Caco-2 (cell line): ENCODE measurements at regions of chr11 and their contacts with region 1.

Region 1: DNA sequence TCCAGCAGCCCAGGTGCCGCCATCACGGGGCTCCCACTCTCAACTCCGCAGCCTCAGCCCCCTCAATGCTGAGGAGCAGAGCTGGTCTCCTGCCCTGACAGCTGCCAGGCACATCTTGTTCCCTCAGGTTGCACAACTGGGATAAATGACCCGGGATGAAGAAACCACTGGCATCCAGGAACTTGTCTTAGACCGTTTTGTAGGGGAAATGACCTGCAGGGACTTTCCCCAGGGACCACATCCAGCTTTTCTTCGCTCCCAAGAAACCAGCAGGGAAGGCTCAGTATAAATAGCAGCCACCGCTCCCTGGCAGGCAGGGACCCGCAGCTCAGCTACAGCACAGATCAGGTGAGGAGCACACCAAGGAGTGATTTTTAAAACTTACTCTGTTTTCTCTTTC is at the start of gene SAA1:
- DNase-seq: no peak
- H3K4me3 ChIP-seq: no peak within 1 kb of the TSS
- H3K4me3 Mint-ChIP-seq: no peak within 1 kb of the TSS
- H3K27ac Mint-ChIP-seq: no peak within 1 kb of the TSS
- H3K4me1 ChIP-seq: peaks cover 15% of the 10 kb centered on the region
- H3K4me1 Mint-ChIP-seq: peaks cover 7% of the 10 kb centered on the region
- H3K27me3 ChIP-seq: no peaks in the 10 kb centered on the region
- H3K27me3 Mint-ChIP-seq: no peaks in the 10 kb centered on the region
- CTCF ChIP-seq: no peak
- total RNA-seq, gene SAA1: not detected in 2 replicates

Region 2: GRCh38 chr11:18243783-18244362 is 22.1 kb before region 1 on chr11:
- CTCF ChIA-PET with region 1: interaction called, 11 read pairs
- POLR2A ChIA-PET with region 1: no interaction called
- intact Hi-C with region 1: no loop called
- DNase-seq: peak; percentile 67 to 81
- H3K4me3 ChIP-seq: no peak overlapping the region
- H3K4me3 Mint-ChIP-seq: no peak overlapping the region
- H3K27ac Mint-ChIP-seq: no peak overlapping the region
- H3K4me1 ChIP-seq: no peaks in the 10 kb centered on the region
- H3K4me1 Mint-ChIP-seq: no peaks in the 10 kb centered on the region
- H3K27me3 ChIP-seq: no peaks in the 10 kb centered on the region
- H3K27me3 Mint-ChIP-seq: peaks cover 9% of the 10 kb centered on the region
- CTCF ChIP-seq: peak; percentile 85 to 89

Region 3: DNA sequence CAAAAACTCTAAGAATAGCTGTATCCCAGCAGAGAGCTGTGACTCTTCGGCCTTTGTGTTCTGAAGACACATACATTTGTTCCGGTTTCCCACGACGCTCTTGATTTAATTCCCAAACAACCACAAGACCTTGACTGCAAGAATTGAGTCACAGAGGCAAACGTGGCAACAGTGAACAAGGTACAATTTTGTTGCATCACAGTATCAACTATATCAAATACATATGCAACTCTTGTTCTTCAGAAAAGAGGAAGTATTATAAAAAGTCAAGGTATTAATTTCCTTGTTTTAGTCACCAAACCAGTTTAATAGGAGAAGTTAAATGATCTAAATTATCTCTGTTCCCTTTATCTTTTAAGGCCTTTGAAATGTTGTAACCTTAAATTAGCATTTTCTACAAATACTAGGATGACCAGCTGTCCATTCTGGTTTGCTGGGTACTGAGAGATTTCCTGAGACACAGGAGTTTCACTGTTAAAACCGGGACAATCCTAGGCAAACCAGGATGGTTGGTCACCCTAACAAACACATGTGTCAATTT is 44.9 kb after region 1 on chr11:
- CTCF ChIA-PET with region 1: no interaction called
- POLR2A ChIA-PET with region 1: interaction called, 3 read pairs
- intact Hi-C with region 1: loop called (anchors 1 kb)
- DNase-seq: no peak
- H3K4me3 ChIP-seq: no peak overlapping the region
- H3K4me3 Mint-ChIP-seq: no peak overlapping the region
- H3K27ac Mint-ChIP-seq: no peak overlapping the region
- H3K4me1 ChIP-seq: peaks cover 29% of the 10 kb centered on the region
- H3K4me1 Mint-ChIP-seq: peaks cover 17% of the 10 kb centered on the region
- H3K27me3 ChIP-seq: no peaks in the 10 kb centered on the region
- H3K27me3 Mint-ChIP-seq: no peaks in the 10 kb centered on the region
- CTCF ChIP-seq: no peak